AG04450 (cell line): ENCODE measurements at regions of chr18 and their contacts with region 1.

Region 1: DNA sequence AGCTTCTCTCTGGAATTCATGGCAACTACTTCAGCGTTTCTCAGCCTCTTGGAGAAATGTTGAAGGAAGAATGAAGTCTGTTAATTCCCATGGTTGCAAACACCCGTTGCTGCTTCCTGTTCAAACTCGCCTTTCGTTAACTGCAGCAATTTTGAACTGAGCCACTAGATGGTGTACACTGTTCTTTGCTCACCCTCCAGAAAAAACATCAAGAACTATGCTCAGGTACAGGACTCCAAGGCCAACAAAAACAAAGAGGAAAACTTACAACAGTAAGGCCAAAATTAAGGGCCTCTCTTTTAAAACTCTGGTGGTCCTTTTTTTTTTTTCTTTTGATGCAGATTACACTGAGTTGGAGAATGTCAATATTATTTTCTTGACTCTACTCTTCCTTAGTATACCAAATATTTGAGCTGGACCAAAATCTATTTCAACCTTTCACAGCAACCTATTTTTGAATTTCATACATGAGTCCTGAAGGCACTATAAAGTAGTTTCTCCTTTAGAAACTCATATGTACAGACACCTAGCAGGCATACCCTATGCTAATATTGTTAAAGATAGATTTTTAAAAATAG is 58.2 kb downstream of the KLHL14 start:
- DNase-seq: peak; percentile 23
- H3K4me3 ChIP-seq: no peak overlapping the region
- H3K27ac ChIP-seq: no peak overlapping the region
- H3K27me3 ChIP-seq: no peaks in the 10 kb centered on the region
- CTCF ChIP-seq: peak; percentile 86

Region 2: DNA sequence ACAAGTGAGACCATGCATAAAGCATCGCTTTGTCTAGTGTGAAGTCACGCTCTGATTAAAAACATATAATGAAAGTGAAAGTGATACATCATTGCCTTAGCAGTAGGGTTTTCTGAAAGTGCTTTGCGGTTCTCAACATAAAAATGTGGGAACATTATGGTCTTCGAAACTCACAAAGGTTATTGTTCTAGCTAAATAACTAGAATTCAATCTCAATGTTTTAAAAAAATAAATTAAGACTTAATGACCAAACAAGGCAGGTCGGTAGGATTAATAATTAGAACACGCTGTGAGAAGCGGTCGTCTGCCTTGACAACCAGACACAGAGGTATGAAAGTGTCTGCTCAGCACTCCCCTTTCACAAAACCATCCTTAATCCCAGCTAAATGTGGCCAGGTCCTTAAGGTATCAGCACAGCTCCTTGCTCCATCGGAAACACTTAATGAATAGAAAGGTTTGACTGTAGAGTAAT is 16.0 kb after region 1 on chr18:
- CTCF ChIA-PET with region 1: interaction called, 13 read pairs
- POLR2A ChIA-PET with region 1: no interaction called
- DNase-seq: no peak
- H3K4me3 ChIP-seq: no peak overlapping the region
- H3K27ac ChIP-seq: no peak overlapping the region
- H3K27me3 ChIP-seq: no peaks in the 10 kb centered on the region
- CTCF ChIP-seq: no peak

Region 3: DNA sequence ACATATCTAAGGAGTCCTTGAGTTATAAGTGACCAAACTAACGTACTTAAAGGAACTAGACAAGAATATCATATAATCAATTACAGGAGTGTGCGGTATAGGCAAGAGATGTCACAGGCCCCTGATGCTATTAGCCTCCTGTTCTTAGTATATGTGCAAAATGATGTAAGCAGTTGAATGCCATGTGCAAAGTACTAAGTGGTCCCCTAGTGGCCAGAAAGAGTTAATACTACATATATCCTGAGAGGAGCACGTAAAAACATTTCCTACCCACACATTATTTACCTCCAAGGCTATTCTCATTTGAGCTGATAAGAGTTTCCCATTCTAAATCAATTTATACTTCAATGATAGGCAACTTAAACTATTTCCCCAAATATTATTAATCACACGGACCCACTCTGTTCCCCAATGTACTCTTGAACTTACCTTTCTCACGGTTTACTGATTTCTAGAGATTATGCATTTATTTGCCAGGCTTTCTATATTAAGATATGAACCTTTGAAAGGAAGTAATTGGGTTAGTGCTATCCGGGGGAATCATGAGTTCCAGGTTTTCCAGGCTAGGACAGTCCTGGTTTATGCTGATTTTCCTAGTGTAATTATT is 216.1 kb after region 1 on chr18:
- CTCF ChIA-PET with region 1: interaction called, 13 read pairs
- POLR2A ChIA-PET with region 1: no interaction called
- DNase-seq: peak; percentile 10
- H3K4me3 ChIP-seq: no peak overlapping the region
- H3K27ac ChIP-seq: no peak overlapping the region
- H3K27me3 ChIP-seq: no peaks in the 10 kb centered on the region
- CTCF ChIP-seq: peak; percentile 79